ENCODE measurements at regions of chr11 and their contacts with region 1.

Region 1: DNA sequence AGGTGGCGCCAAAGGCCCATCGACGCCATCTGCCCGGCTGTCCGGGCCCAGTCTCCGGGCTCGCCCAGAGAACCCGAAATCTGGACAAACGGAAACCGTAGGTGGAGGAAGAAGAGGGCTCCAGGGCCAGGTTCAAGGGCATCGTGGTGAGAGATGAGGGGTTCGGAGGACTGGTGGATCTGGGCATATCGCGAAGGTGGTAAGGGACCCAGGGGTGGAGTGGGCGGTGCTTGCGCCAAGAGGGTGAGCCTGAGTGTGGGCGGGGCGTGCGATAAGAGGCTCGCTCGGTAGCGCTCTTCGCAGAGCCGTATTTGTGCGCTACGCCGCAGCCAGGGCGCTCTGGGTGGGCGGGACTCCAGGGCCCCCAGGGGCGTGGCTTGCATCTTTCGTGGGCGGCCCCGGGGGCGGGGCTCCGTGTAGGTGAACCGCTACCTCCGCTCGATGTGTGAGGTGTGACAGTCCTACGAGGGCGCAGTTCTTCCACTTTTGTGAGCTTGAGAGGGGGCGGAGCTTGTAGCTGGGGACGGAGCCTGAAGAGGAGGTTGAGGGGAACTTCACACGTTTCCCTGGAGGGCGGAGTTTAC is 4.8 kb downstream of the CD248 start:
- DNase-seq: peak; percentile 87
- ATAC-seq: peak; percentile 89
- H3K4me3 ChIP-seq: peak overlapping the region; percentile 72 to 83
- H3K27ac ChIP-seq: peak overlapping the region; percentile 86
- H3K4me1 ChIP-seq: peaks cover 6% of the 10 kb centered on the region
- H3K27me3 ChIP-seq: no peaks in the 10 kb centered on the region
- CTCF ChIP-seq: peak; percentile 99

Region 2: DNA sequence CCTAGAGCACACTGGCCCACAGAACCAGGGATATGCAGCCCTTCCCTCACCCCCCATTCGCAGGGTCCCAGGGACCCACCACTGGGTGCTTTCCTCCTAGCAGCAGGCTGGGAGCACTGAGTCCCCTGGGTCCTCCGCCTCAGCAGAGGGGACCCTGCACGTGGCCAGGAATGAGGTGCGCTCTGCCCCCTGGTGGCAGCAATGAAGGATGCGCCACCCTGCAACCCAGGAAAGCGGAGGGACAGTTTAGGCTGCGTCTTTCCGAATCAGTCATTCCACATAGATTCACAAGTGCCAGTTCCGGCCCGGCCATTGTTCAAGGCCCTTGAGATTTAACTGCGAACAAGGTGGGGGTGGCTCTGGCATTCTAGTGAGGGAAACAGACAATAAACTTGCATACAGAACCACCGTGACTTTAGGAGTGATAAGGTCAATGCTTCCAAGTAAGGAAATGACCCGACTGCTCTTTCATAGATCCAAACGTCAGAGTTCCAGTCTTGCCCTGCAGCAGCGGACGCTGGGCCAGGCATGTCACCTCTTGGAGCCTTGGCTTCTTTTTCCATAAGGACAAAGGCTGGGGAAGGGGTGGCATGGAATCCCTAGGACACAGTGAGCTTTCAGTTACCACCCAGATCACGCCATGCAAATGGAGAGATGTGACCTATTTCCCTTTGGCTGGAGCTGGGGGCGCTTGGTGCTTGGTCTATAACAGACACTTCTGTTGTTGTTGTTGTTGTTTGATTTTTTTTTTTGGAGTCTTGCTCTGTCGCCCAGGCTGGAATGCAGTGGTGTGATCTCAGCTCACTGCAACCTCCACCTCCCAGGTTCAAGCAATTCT is 16.5 kb after region 1 on chr11:
- CTCF ChIA-PET with region 1: interaction called, 15 read pairs
- POLR2A ChIA-PET with region 1: interaction called, 9 read pairs
- in situ Hi-C with region 1: no loop called
- intact Hi-C with region 1: loop called (anchors 2 kb)
- DNase-seq: peak; percentile 72
- ATAC-seq: peak; percentile 89
- H3K4me3 ChIP-seq: peak overlapping the region in 1 of 2 experiments; percentile 6; a peak in 2 of 4 replicates
- H3K27ac ChIP-seq: peak overlapping the region; percentile 9; the same call in 1 of the 2 replicates
- H3K4me1 ChIP-seq: peaks cover 18% of the 10 kb centered on the region
- H3K27me3 ChIP-seq: no peaks in the 10 kb centered on the region
- CTCF ChIP-seq: peak; percentile 99

Region 3: DNA sequence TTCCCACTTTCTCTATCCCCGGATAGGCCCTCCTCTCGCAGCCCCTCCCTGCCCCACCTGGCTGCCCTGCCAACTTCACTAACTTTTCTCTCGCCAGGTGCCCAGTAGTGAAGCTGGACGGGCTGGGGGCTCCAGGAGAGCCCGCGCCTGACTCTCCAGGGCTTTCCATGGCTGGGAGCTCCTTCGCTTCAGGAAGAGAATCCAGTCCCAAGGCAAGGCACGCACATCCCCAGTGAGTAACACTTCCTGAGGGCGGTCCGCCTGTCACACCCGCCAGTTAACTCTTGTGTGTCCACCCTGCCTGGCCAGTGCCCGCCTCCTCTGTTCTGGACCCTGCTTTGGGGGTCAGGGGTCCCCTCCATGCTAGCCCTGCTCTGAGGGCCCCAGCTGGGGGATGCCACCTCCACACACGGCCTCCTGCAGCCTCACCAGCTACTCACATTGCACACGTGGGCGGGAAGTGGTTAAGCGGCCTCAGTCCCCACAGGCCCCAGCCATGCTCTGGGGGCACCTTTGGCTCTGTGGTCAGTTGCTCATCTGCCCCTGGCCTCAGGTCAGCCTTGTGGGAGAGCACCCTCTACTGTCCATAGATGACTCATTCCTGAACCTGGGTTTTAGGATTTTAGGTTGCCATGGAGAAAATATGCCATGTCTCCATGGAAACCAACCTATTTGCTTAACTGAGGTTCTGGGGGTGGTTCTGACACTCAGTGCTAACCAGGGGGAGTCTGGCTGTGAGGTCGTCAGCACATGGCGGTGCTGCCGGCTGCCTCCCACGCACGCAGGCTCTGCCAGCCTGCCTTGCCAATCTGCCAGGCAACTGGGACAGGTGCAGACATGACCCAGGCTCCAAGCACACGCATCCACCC is 24.4 kb after region 1 on chr11 and contains the start of gene RIN1:
- CTCF ChIA-PET with region 1: interaction called, 17 read pairs
- POLR2A ChIA-PET with region 1: interaction called, 4 read pairs
- in situ Hi-C with region 1: no loop called
- intact Hi-C with region 1: no loop called
- DNase-seq: peak; percentile 81
- ATAC-seq: peak; percentile 84
- H3K4me3 ChIP-seq: peak within 1 kb of the TSS; percentile 66 to 87
- H3K27ac ChIP-seq: peak within 1 kb of the TSS; percentile 89
- H3K4me1 ChIP-seq: peaks cover 41% of the 10 kb centered on the region
- H3K27me3 ChIP-seq: no peaks in the 10 kb centered on the region
- CTCF ChIP-seq: no peak; the same call in 1 of the 2 replicates
- total RNA-seq, gene RIN1: 21.7 TPM

Region 4: DNA sequence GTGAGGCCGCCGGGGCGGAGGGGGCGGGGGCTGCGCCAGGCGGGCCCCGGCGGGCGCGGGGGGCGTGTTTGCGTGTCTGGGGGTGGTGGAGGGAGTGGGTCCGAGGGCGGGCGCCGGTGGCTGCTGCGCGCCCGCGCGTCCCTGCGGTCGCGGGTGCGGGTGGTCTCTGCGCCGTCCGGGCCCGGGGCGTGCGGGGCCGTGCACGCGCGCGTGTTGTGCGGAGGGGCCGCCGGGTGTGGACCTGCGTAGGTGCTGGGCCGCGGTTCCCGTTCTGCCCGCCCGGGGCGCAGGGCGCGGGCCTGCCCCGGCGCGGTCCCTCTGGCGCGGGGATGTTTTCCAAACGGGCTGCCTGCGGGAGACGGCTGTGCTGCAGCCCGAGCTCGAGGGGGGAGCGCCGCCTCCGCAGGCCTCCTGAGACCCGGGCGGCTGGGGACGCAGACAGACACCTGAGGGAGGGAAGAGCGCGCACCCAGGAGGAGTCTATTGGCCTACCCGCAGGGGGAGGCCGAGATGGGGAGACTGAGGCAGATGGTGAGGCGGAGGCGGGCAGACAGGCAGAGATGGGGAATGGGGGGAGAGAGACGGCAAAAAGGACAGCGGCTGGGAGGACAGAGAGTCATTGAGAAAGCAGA is 155.1 kb after region 1 on chr11:
- CTCF ChIA-PET with region 1: no interaction called
- POLR2A ChIA-PET with region 1: no interaction called
- in situ Hi-C with region 1: no loop called
- intact Hi-C with region 1: no loop called
- DNase-seq: no peak
- ATAC-seq: peak; percentile 70
- H3K4me3 ChIP-seq: peak overlapping the region; percentile 50 to 70
- H3K27ac ChIP-seq: peak overlapping the region; percentile 26; the same call in 1 of the 2 replicates
- H3K4me1 ChIP-seq: peaks cover 11% of the 10 kb centered on the region
- H3K27me3 ChIP-seq: no peaks in the 10 kb centered on the region
- CTCF ChIP-seq: no peak

Region 5: DNA sequence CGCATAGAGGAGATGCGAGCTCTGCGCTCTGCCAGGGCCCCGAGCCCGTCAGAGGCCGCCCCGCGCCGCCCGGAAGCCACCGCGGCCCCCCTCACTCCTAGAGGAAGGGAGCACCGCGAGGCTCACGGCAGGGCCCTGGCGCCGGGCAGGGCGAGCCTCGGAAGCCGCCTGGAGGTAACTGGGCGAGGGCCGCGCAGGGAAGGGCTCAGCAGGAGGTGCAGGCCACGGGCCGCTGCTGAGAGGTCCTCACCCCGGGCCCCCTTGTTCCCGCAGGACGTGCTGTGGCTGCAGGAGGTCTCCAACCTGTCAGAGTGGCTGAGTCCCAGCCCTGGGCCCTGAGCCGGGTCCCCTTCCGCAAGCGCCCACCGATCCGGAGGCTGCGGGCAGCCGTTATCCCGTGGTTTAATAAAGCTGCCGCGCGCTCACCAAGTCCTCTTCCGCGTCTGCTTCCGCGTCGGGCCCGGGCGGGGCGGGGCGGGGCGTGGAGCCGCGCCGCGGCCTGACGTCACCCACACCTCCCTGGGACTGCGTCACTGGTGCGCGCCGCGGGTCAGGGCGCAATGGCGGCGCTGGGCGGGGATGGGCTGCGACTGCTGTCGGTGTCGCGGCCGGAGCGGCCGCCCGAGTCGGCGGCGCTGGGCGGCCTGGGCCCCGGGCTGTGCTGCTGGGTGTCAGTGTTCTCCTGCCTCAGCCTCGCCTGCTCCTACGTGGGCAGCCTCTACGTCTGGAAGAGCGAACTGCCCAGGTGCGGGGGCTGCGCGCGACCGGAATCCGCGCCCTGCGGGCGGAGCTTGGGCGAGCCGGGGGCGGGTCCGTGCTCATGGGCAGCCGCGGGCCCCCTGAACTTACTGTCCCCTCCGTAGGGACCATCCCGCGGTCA is 531.1 kb after region 1 on chr11 and contains the start of gene RCE1:
- CTCF ChIA-PET with region 1: no interaction called
- POLR2A ChIA-PET with region 1: no interaction called
- in situ Hi-C with region 1: no loop called
- intact Hi-C with region 1: no loop called
- DNase-seq: peak; percentile 47
- ATAC-seq: peak; percentile 94
- H3K4me3 ChIP-seq: peak within 1 kb of the TSS; percentile 82 to 99
- H3K27ac ChIP-seq: peak within 1 kb of the TSS; percentile 95
- H3K4me1 ChIP-seq: peaks cover 35% of the 10 kb centered on the region
- H3K27me3 ChIP-seq: no peaks in the 10 kb centered on the region
- CTCF ChIP-seq: no peak
- total RNA-seq, gene RCE1: 43.7 TPM